IMR-90 (cell line): ENCODE measurements at regions of chr11 and their contacts with region 1.

Region 1: GRCh38 chr11:9137293-9138132 is 46.1 kb upstream of the SCUBE2 start:
- DNase-seq: peak; percentile 69
- ATAC-seq: peak; percentile 96
- H3K4me3 ChIP-seq: no peak overlapping the region
- H3K27ac ChIP-seq: no peak overlapping the region
- H3K4me1 ChIP-seq: peaks cover 8% of the 10 kb centered on the region
- H3K27me3 ChIP-seq: no peaks in the 10 kb centered on the region
- CTCF ChIP-seq: peak; percentile 92
- POLR2A ChIP-seq: peak; percentile 25; the same call in 1 of the 2 replicates
- RAD21 ChIP-seq: peak; percentile 92

Region 2: DNA sequence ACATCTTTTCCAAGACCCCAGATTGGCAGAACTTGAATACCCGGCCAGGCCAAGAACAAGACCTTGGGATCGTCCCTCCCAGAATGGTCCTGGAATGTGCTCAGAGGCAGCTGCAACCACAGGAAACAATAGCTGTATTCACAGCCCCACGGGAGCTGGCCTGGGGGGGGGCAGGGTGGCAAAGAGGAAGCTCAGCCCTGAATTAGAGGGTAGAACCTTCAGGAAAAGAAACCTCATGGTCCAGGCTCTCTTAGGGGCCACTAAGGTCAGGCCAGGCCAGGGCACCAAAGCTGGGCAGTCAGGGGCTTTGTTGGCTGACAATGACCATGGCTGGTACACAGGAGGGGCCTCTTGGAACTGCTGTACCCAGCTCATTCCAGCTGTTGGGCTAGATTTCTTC is 437.6 kb before region 1 on chr11:
- CTCF ChIA-PET with region 1: no interaction called
- POLR2A ChIA-PET with region 1: no interaction called
- dilution Hi-C with region 1: no loop called
- in situ Hi-C with region 1: loop called (anchors 25 kb)
- intact Hi-C with region 1: loop called (anchors 10 kb)
- DNase-seq: peak; percentile 55
- ATAC-seq: peak; percentile 78
- H3K4me3 ChIP-seq: no peak overlapping the region
- H3K27ac ChIP-seq: peak overlapping the region; percentile 44
- H3K4me1 ChIP-seq: peaks cover 10% of the 10 kb centered on the region
- H3K27me3 ChIP-seq: no peaks in the 10 kb centered on the region
- CTCF ChIP-seq: no peak
- POLR2A ChIP-seq: no peak
- RAD21 ChIP-seq: no peak

Region 3: DNA sequence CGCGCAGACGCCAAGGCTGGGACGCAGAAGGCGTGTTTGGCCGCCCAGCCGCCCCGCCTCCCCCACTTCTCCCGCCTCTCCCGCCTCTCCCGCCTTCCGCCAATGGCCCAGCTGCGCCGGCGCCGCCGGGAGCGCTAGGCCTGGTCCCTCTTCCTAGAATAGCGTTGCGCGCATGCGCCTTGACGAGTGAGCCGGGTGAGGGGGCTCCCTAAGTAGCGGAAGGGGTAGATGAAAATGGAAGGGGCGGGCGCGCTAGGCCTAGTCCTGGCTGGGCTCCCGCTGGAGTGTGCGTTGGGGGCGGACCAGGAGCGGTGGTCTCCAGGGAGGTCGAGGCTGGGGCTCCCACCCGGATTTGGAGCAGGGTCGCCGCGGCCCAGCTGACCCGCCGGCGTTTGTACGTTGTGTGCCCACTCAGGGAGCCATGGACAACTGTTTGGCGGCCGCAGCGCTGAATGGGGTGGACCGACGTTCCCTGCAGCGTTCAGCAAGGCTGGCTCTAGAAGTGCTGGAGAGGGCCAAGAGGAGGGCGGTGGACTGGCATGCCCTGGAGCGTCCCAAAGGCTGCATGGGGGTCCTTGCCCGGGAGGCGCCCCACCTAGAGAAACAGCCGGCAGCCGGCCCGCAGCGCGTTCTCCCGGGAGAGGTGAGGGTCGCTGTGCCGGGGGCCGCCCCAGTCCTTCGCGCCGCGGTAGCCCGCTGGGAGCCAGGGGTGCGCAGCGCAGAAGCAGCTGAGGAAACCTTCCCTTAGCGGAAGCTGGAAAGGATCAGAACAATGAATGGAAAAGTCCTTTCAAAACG is 226.3 kb before region 1 on chr11 and contains the start of gene AKIP1:
- CTCF ChIA-PET with region 1: interaction called, 3 read pairs
- POLR2A ChIA-PET with region 1: no interaction called
- dilution Hi-C with region 1: no loop called
- in situ Hi-C with region 1: loop called (anchors 5 kb)
- intact Hi-C with region 1: loop called (anchors 1 kb)
- DNase-seq: peak; percentile 94
- ATAC-seq: peak; percentile 92
- H3K4me3 ChIP-seq: peak within 1 kb of the TSS; percentile 91
- H3K27ac ChIP-seq: peak within 1 kb of the TSS; percentile 97
- H3K4me1 ChIP-seq: peaks cover 11% of the 10 kb centered on the region
- H3K27me3 ChIP-seq: no peaks in the 10 kb centered on the region
- CTCF ChIP-seq: no peak
- POLR2A ChIP-seq: 0 out of 2 replicates have a peak, but pooled peaks have one; percentile 24
- RAD21 ChIP-seq: 0 out of 2 replicates have a peak, but pooled peaks have one; percentile 3
- total RNA-seq, gene AKIP1: 27.8 and 33.9 TPM in 2 replicates

Region 4: GRCh38 chr11:9015677-9016076 is 121.8 kb before region 1 on chr11:
- CTCF ChIA-PET with region 1: interaction called, 20 read pairs
- POLR2A ChIA-PET with region 1: no interaction called
- dilution Hi-C with region 1: no loop called
- in situ Hi-C with region 1: loop called (anchors 5 kb)
- intact Hi-C with region 1: loop called (anchors 1 kb)
- DNase-seq: peak; percentile 78
- ATAC-seq: peak; percentile 93
- H3K4me3 ChIP-seq: no peak overlapping the region
- H3K27ac ChIP-seq: no peak overlapping the region
- H3K4me1 ChIP-seq: no peaks in the 10 kb centered on the region
- H3K27me3 ChIP-seq: no peaks in the 10 kb centered on the region
- CTCF ChIP-seq: peak; percentile 64
- POLR2A ChIP-seq: no peak
- RAD21 ChIP-seq: peak; percentile 64